ENCODE measurements at regions of chr5 and their contacts with region 1.

Region 1: GRCh38 chr5:56270568-56271392 is 37.6 kb upstream of the ANKRD55 start:
- H3K4me3 Mint-ChIP-seq: no peak overlapping the region
- H3K27ac Mint-ChIP-seq: peak overlapping the region; percentile 54
- H3K4me1 Mint-ChIP-seq: peaks cover 24% of the 10 kb centered on the region
- H3K27me3 Mint-ChIP-seq: no peaks in the 10 kb centered on the region

Region 2: GRCh38 chr5:55982957-55983381 is 287.8 kb before region 1 on chr5:
- intact Hi-C with region 1: loop called (anchors 1 kb)
- H3K4me3 Mint-ChIP-seq: no peak overlapping the region
- H3K27ac Mint-ChIP-seq: no peak overlapping the region
- H3K4me1 Mint-ChIP-seq: peaks cover 44% of the 10 kb centered on the region
- H3K27me3 Mint-ChIP-seq: no peaks in the 10 kb centered on the region

Region 3: GRCh38 chr5:56481428-56482357 is 210.9 kb after region 1 on chr5:
- intact Hi-C with region 1: loop called (anchors 1 kb)
- H3K4me3 Mint-ChIP-seq: peak overlapping the region; percentile 77
- H3K27ac Mint-ChIP-seq: peak overlapping the region; percentile 98
- H3K4me1 Mint-ChIP-seq: peaks cover 73% of the 10 kb centered on the region
- H3K27me3 Mint-ChIP-seq: no peaks in the 10 kb centered on the region

Region 4: DNA sequence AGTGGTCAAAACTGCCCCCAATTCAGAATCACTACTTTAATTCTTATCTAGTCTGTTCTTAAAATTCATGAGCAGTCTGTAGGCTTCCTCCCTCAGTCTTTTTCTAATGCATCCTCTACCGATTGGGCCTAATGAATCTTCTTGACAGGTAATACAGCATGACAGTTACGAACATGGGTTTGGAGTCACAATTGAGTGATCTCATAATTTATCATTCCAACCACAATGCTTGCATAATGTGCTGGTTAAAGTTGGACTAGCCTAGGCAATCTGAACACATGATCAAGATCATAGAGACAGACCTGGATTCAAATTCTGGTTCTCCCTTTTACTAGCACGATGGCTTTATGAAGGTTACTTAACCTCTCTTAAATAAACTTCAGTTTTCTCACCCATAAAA is 605.5 kb after region 1 on chr5:
- intact Hi-C with region 1: loop called (anchors 10 kb)
- H3K4me3 Mint-ChIP-seq: no peak overlapping the region
- H3K27ac Mint-ChIP-seq: peak overlapping the region; percentile 2
- H3K4me1 Mint-ChIP-seq: peaks cover 43% of the 10 kb centered on the region
- H3K27me3 Mint-ChIP-seq: no peaks in the 10 kb centered on the region

Measured in dendritic cell treated with granulocyte-macrophage colony-stimulating factor and Interleukin-4, amounts not matched to agents 40 ng/mL and 50 ng/mL, for 4 days (primary cell).